ENCODE measurements at regions of chr6 and their contacts with region 1.

Region 1: GRCh38 chr6:3273707-3274521 is 15.2 kb downstream of the PSMG4 start:
- DNase-seq: no peak
- H3K4me3 ChIP-seq: no peak overlapping the region
- H3K27ac ChIP-seq: no peak overlapping the region
- H3K4me1 ChIP-seq: no peaks in the 10 kb centered on the region; a peak in 1 of 7 replicates
- H3K27me3 ChIP-seq: no peaks in the 10 kb centered on the region
- CTCF ChIP-seq: no peak
- EP300 ChIP-seq: no peak
- POLR2A ChIP-seq: no peak
- RAD21 ChIP-seq: no peak

Region 2: GRCh38 chr6:3258720-3259490 is 15.0 kb before region 1 on chr6 and contains the start of gene PSMG4:
- CTCF ChIA-PET with region 1: interaction called, 8 read pairs
- POLR2A ChIA-PET with region 1: interaction called, 14 read pairs
- DNase-seq: peak in 1 of 2 experiments; percentile 99
- H3K4me3 ChIP-seq: peak within 1 kb of the TSS; percentile 84 to 93 (median 91)
- H3K27ac ChIP-seq: no peak within 1 kb of the TSS
- H3K4me1 ChIP-seq: peaks cover 3 to 9% (median 7%) of the 10 kb centered on the region in 4 experiments; a peak in 4 of 7 replicates
- H3K27me3 ChIP-seq: no peaks in the 10 kb centered on the region
- CTCF ChIP-seq: no peak
- EP300 ChIP-seq: no peak
- POLR2A ChIP-seq: peak in 1 of 2 experiments; percentile 55; a peak in 2 of 3 replicates
- RAD21 ChIP-seq: peak in 1 of 2 experiments; percentile 15; a peak in 1 of 4 replicates
- total RNA-seq, gene PSMG4: 40.6 and 45.6 TPM in 2 replicates

Region 3: DNA sequence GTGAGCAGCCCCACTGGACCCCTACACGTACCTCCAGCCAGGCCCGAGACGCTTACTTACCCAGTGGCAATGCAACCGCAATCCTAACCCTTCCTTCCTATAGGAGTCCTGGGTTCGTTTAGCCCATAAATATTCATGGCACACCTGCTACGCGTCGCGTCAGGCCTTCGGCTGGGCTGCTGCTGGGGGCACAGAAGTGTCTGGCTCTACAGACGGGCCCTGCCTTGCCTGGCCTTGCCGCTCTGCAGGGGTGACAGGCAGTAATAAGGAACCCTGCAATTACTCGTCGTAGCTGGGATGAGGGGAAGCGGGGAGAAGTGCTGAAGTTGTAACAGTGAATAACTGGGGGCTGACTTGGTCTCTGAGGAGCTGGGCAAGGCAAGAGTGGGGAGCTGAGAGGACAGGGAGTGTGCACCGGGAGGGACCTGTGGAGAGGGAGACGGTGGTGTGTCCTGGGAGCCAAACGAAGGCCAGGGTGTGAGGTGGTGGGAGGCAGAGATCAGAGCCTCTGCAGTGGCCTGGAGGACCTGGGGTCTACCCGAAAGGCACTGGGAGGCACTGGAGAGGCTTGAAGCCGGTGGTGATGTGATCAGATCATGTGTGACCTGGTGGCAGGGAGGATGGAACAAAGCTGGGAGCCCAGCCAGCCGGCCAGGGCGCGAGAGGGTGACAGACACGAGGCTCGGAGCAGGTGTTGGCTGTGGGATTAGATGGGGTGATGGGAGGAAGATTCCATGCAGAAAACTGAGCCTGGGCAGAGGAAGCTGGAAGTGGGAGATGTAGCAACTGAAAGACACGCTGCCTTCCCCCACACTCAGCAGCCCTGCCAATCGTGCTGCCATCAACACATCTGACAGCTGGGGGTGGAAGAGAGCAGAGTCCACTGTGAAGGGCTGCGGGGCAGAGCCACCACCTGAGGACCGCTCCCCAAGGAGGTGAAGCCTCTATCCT is 21.3 kb after region 1 on chr6:
- CTCF ChIA-PET with region 1: interaction called, 17 read pairs
- POLR2A ChIA-PET with region 1: interaction called, 3 read pairs
- DNase-seq: no peak
- H3K4me3 ChIP-seq: no peak overlapping the region
- H3K27ac ChIP-seq: no peak overlapping the region
- H3K4me1 ChIP-seq: no peaks in the 10 kb centered on the region
- H3K27me3 ChIP-seq: no peaks in the 10 kb centered on the region
- CTCF ChIP-seq: peak; percentile 43 to 64 (median 60); a peak in 3 of 4 replicates
- EP300 ChIP-seq: no peak
- POLR2A ChIP-seq: no peak
- RAD21 ChIP-seq: peak; percentile 66 to 74

Measured in H1 (cell line).